ENCODE measurements at regions of chr1 and their contacts with region 1.

Region 1: DNA sequence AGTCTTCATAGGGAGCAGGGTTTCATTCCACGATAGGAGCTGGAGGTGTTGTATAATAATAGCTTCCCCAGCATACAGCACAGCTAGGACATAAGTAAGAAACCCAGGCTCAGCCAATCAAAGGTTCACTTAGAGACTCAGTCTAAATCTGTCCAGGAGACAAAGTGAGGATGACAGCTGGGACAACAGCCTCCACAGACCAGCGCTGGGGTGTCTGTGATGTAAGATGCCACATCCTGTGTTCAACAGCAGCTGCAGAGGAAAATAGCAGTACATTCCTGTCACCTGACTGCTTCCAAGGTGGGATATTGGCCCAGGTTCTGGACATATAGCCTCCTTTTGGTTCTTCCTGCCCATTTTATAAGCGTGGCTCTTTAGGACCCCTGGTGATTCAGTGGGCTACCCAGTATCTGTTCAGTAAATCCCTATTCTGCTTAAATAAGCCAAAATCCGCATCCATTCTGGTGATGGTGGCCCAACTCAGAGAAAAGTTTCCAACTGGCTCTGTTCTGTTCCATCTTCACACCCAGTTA is 176.8 kb upstream of the SYT6 start:
- DNase-seq: no peak
- H3K4me3 ChIP-seq: no peak overlapping the region
- H3K27ac ChIP-seq: no peak overlapping the region
- H3K4me1 ChIP-seq: no peaks in the 10 kb centered on the region
- H3K27me3 ChIP-seq: peaks cover 2 to 6% of the 10 kb centered on the region in 2 experiments
- CTCF ChIP-seq: no peak
- POLR2A ChIP-seq: no peak

Region 2: GRCh38 chr1:114319418-114319817 is 11.1 kb before region 1 on chr1:
- CTCF ChIA-PET with region 1: interaction called, 13 read pairs
- POLR2A ChIA-PET with region 1: no interaction called
- dilution Hi-C with region 1: no loop called
- intact Hi-C with region 1: no loop called
- DNase-seq: no peak
- H3K4me3 ChIP-seq: no peak overlapping the region
- H3K27ac ChIP-seq: no peak overlapping the region
- H3K4me1 ChIP-seq: no peaks in the 10 kb centered on the region
- H3K27me3 ChIP-seq: no peaks in the 10 kb centered on the region
- CTCF ChIP-seq: no peak
- POLR2A ChIP-seq: no peak